MCF 10A (cell line): ENCODE measurements at regions of chr2 and their contacts with region 1.

Region 1: GRCh38 chr2:230614913-230615332 is 97.7 kb upstream of the CAB39 start:
- DNase-seq: peak; percentile 58
- H3K4me3 Mint-ChIP-seq: no peak overlapping the region
- H3K27ac Mint-ChIP-seq: no peak overlapping the region
- H3K4me1 Mint-ChIP-seq: peaks cover 7% of the 10 kb centered on the region
- H3K27me3 Mint-ChIP-seq: no peaks in the 10 kb centered on the region
- CTCF ChIP-seq: no peak

Region 2: DNA sequence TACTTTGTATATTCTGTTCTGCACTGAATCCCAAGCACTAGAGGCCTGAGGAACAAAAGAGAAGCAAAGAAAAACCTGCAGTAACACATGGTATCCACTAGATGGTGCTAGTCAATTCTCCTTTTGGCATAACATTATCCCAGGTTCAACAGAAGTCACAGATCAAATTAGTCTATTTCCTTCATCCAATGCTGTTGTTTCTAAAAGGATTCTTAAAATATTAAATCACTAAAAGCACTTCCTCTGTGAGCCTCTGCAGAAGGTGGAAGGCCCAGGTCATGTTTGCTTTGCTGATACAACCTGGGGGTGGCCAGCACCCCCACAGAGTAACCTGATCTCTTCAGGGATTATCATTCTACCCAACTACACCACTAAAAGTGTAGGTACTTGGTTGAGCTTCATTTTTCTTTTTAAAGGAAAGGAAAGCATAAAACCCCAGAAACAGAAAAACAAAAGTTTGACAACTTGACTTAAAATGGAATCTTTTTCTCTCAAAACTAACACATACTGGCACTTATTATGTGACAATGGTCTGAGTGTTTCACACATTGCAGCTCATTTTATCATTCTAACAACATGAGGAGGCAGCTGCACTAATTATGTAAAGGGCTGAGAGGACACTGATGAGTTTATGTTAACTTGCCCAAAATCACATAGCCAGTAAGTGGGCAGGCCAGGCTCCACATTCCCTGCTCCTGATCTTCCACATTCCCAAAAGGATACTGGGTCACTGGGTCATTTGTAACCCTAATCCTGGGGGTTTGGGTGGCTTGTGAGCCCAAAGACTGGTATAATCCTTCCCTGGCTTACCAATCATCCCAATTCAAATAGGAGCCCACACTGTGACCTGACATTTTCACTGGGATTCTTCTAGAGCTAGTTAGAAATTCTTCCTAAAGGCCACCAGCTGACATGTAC is 833.8 kb before region 1 on chr2:
- CTCF ChIA-PET with region 1: no interaction called
- POLR2A ChIA-PET with region 1: no interaction called
- intact Hi-C with region 1: loop called (anchors 1 kb)
- DNase-seq: peak; percentile 55
- H3K4me3 Mint-ChIP-seq: no peak overlapping the region
- H3K27ac Mint-ChIP-seq: no peak overlapping the region
- H3K4me1 Mint-ChIP-seq: peaks cover 6% of the 10 kb centered on the region
- H3K27me3 Mint-ChIP-seq: no peaks in the 10 kb centered on the region
- CTCF ChIP-seq: peak; percentile 72

Region 3: GRCh38 chr2:230007931-230008707 is 606.8 kb before region 1 on chr2:
- CTCF ChIA-PET with region 1: interaction called, 5 read pairs
- POLR2A ChIA-PET with region 1: no interaction called
- intact Hi-C with region 1: loop called (anchors 1 kb)
- DNase-seq: peak; percentile 82
- H3K4me3 Mint-ChIP-seq: no peak overlapping the region
- H3K27ac Mint-ChIP-seq: no peak overlapping the region
- H3K4me1 Mint-ChIP-seq: peaks cover 5% of the 10 kb centered on the region
- H3K27me3 Mint-ChIP-seq: no peaks in the 10 kb centered on the region
- CTCF ChIP-seq: peak; percentile 84

Region 4: DNA sequence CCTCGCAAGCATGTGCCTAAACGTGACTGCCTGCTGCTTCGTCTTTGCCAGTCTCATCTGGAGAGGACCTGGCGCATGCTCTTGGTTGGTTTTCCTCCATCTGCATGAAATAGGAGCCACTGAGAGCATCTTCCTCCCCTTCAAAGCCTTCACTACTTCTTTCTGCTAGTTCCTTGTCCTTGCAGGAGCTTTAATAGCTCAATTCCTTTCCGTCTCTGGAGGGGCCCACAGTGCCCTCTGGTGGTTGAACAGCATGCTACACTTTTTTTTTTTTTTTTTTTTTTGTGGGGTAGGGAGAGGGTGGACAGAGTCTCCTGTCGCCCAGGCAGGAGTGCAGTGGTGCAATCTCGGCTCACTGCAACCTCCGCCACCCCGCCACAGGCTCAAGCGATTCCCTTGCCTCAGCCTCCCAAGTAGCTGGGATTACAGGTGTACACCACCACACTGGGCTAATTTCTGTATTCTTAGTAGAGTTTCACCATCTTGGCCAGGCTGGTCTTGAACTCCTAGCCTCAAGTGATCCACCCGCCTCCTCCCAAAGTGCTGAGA is 454.7 kb before region 1 on chr2:
- CTCF ChIA-PET with region 1: interaction called, 5 read pairs
- POLR2A ChIA-PET with region 1: no interaction called
- intact Hi-C with region 1: loop called (anchors 2 kb)
- DNase-seq: peak; percentile 65
- H3K4me3 Mint-ChIP-seq: no peak overlapping the region
- H3K27ac Mint-ChIP-seq: no peak overlapping the region
- H3K4me1 Mint-ChIP-seq: no peaks in the 10 kb centered on the region
- H3K27me3 Mint-ChIP-seq: no peaks in the 10 kb centered on the region
- CTCF ChIP-seq: peak; percentile 72

Region 5: GRCh38 chr2:230793572-230794359 is 178.8 kb after region 1 on chr2:
- CTCF ChIA-PET with region 1: interaction called, 6 read pairs
- POLR2A ChIA-PET with region 1: interaction called, 4 read pairs
- intact Hi-C with region 1: loop called (anchors 1 kb)
- DNase-seq: peak; percentile 99
- H3K4me3 Mint-ChIP-seq: peak overlapping the region; percentile 66
- H3K27ac Mint-ChIP-seq: no peak overlapping the region
- H3K4me1 Mint-ChIP-seq: peaks cover 20% of the 10 kb centered on the region
- H3K27me3 Mint-ChIP-seq: no peaks in the 10 kb centered on the region
- CTCF ChIP-seq: no peak

Region 6: DNA sequence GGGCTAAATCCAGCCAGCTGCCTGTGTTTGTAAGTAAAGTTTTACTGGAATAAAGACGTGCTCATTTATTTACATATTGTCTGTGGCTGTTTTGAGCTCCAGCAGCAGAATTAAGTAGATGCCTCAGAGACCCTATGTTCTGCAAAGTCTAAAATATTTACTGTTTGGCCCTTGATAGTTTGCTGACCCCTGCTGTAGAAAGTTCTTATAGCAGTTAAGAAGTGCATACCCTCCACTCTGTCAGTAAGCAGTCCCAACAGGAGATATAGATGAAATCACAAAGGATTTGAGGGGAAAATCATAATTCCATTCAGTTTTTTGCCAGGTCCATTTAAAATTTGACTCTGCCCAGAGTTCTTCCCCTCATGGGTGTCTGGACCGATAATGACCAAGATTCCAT is 199.7 kb after region 1 on chr2:
- CTCF ChIA-PET with region 1: interaction called, 4 read pairs
- POLR2A ChIA-PET with region 1: no interaction called
- intact Hi-C with region 1: loop called (anchors 5 kb)
- DNase-seq: peak; percentile 30
- H3K4me3 Mint-ChIP-seq: no peak overlapping the region
- H3K27ac Mint-ChIP-seq: no peak overlapping the region
- H3K4me1 Mint-ChIP-seq: no peaks in the 10 kb centered on the region
- H3K27me3 Mint-ChIP-seq: no peaks in the 10 kb centered on the region
- CTCF ChIP-seq: peak; percentile 28

Region 7: DNA sequence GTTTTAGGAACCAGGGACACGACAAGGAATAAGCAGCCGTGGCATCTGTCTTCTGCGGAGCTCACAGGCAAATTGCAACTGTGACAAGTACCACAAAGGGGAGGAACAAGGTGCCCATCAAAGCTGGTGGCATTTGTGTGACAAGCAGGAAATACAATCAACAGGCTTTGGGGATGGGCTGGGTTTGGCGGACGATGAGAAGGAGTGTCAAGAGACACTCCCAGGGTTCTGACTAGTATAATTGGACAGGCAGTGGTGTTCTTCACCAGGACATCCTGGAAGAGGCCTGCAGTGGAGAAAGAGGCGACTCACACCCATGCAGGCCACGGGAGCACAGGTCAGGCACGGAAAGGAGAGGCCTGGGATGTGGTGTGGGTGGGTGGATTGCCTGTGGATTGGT is 366.8 kb after region 1 on chr2:
- CTCF ChIA-PET with region 1: no interaction called
- POLR2A ChIA-PET with region 1: no interaction called
- intact Hi-C with region 1: no loop called
- DNase-seq: no peak
- H3K4me3 Mint-ChIP-seq: no peak overlapping the region
- H3K27ac Mint-ChIP-seq: no peak overlapping the region
- H3K4me1 Mint-ChIP-seq: no peaks in the 10 kb centered on the region
- H3K27me3 Mint-ChIP-seq: peaks cover 16% of the 10 kb centered on the region
- CTCF ChIP-seq: no peak